ENCODE measurements at regions of chrX and their contacts with region 1.

Region 1: GRCh38 chrX:120207009-120207615 is 43.5 kb upstream of the ZBTB33 start:
- DNase-seq: no peak
- ATAC-seq: no peak
- H3K4me3 Mint-ChIP-seq: no peak overlapping the region
- H3K27ac Mint-ChIP-seq: no peak overlapping the region
- H3K4me1 Mint-ChIP-seq: no peaks in the 10 kb centered on the region
- H3K27me3 Mint-ChIP-seq: no peaks in the 10 kb centered on the region
- CTCF ChIP-seq: no peak

Region 2: DNA sequence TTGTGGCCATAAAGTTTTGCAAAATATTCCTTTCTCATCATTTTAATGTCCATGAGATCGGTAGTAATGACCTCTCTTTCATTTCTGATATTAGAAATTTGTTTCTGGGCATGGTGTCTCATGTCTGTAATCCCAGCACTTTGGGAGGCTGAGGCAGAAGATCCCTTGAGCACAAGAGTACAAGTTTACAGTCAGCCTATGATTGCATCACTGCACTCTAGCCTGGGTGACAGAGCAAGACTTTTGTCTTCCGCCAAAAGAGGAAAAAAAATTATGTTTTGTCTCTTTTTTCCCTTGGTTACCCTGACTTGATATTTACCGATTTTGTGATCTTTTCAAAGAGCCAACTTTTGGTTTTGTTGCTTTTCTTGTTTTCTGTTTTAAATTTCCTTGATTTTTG is 252.7 kb before region 1 on chrX:
- CTCF ChIA-PET with region 1: no interaction called
- POLR2A ChIA-PET with region 1: no interaction called
- intact Hi-C with region 1: no loop called
- DNase-seq: no peak
- ATAC-seq: no peak
- H3K4me3 Mint-ChIP-seq: no peak overlapping the region
- H3K27ac Mint-ChIP-seq: no peak overlapping the region
- H3K4me1 Mint-ChIP-seq: no peaks in the 10 kb centered on the region
- H3K27me3 Mint-ChIP-seq: peaks cover 8% of the 10 kb centered on the region
- CTCF ChIP-seq: no peak

Region 3: DNA sequence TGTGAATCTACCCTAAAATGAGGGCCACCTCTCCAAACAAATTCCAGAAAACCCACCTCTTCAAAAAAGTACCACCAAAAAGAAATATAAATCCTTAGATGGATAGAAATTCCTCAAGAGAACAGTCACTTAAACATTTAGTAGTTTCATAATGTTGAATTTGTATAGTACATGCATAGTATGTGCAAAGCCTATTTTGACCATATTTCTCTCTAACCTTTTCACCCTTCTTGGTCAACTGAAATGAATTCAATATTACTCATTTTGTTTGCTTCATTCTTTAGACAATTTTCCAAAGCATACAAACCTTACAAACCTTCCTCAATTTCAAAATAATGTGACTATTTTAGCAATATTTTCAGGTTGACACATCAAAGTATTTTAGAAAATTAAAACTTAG is 95.5 kb before region 1 on chrX:
- CTCF ChIA-PET with region 1: no interaction called
- POLR2A ChIA-PET with region 1: no interaction called
- intact Hi-C with region 1: loop called (anchors 10 kb)
- DNase-seq: no peak
- ATAC-seq: no peak
- H3K4me3 Mint-ChIP-seq: no peak overlapping the region
- H3K27ac Mint-ChIP-seq: no peak overlapping the region
- H3K4me1 Mint-ChIP-seq: no peaks in the 10 kb centered on the region
- H3K27me3 Mint-ChIP-seq: peaks cover 2% of the 10 kb centered on the region
- CTCF ChIP-seq: no peak